ENCODE measurements at regions of chr7 and their contacts with region 1.

Region 1: DNA sequence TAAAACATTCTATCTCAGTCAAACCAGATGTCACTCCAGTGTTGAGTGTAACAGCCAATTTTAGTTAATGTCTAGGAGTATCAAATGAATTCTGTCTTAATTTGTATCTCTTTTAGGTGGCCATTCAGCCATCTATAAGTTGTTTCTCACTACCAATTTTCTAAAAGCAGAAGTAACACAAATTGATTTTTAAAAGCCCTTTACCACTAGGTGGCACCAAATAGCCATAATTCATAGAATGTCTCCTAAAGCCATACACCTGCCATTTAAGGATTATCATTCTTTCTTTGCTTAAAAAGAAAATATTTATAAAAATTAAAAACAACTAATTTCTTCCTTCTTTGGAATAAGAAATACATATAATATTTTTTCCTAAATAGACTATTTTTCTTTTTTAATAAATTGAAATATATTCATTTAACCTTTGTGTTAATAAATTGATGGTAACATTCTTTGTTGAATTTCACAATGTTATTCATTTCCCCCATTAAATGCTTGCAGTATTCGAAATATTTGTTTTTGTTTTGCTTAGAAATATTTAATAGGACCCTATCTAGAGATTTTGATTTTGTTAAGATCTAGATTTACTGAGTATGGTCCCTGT is 107.8 kb upstream of the PPP1R3A start:
- DNase-seq: peak; percentile 76
- H3K4me3 ChIP-seq: no peak overlapping the region
- H3K27ac ChIP-seq: no peak overlapping the region
- H3K4me1 ChIP-seq: no peaks in the 10 kb centered on the region
- H3K27me3 ChIP-seq: peaks cover 42% of the 10 kb centered on the region
- CTCF ChIP-seq: peak; percentile 71

Region 2: GRCh38 chr7:114405427-114405826 is 378.8 kb after region 1 on chr7:
- CTCF ChIA-PET with region 1: no interaction called
- POLR2A ChIA-PET with region 1: no interaction called
- intact Hi-C with region 1: loop called (anchors 10 kb)
- DNase-seq: peak; percentile 15
- H3K4me3 ChIP-seq: no peak overlapping the region
- H3K27ac ChIP-seq: no peak overlapping the region
- H3K4me1 ChIP-seq: no peaks in the 10 kb centered on the region
- H3K27me3 ChIP-seq: peaks cover 40% of the 10 kb centered on the region
- CTCF ChIP-seq: peak; percentile 56

Region 3: DNA sequence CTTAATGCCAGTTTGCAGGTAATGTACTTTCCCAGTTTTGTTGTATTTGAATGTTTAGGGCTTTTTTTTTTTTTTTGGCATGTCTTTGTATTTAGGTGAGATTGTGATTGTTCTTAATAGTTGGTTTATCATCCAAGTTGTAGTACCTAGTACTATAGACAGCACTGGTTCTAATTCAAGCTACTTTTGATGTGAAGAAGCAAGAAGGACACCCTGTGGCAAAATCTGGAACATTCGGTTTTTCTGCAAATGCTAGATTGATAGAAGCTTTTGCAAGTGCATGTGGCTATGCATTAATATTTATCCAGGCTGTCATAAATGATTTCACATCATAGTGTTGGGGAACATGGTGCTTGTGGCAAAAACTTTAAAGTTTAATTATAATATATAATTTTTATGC is 636.9 kb after region 1 on chr7:
- CTCF ChIA-PET with region 1: no interaction called
- POLR2A ChIA-PET with region 1: no interaction called
- intact Hi-C with region 1: loop called (anchors 10 kb)
- DNase-seq: peak; percentile 35
- H3K4me3 ChIP-seq: no peak overlapping the region
- H3K27ac ChIP-seq: no peak overlapping the region
- H3K4me1 ChIP-seq: peaks cover 5% of the 10 kb centered on the region
- H3K27me3 ChIP-seq: no peaks in the 10 kb centered on the region
- CTCF ChIP-seq: peak; percentile 52